T-cell (primary cell): ENCODE measurements at regions of chr10 and their contacts with region 1.

Region 1: DNA sequence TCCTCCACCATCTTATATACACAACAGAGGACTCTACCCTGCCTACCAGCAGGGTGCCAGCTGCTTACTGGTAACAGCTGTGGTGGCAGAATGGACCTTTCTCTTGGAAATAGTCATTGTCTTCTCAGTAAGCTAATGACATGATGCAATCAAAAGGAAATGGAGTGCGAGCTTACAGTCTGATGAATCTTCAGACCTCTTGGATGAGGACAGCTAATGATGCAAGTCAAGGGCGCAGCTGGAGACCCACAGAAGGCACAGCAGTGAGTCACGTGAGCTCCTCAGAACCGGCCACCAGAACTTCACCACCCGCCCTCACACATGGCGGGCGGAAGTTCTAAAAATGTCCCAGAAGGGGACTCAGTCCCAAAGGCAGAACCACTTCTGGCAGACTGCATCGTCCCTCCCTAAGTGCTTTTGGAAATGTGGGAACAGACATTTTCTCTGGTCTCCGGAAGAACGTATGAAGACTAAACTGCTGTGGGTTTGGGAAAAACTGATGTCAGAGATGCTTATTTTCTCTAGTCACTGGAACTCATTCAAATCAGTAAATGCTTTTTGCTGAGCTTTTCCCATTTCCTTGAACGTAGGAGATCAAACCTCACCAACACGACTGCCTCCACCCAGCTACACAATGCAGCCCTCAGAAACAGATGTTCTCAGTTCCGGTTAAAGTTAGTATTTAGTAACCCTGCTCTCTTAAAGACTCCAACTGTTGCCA is 96.4 kb downstream of the FAS start:
- DNase-seq: peak in 2 of 35 experiments; percentile 0 to 2
- ATAC-seq: no peak
- H3K4me3 ChIP-seq: no peak overlapping the region
- H3K4me3 Mint-ChIP-seq: peak overlapping the region in 1 of 3 donors; percentile 6
- H3K27ac ChIP-seq: no peak overlapping the region
- H3K27ac Mint-ChIP-seq: peak overlapping the region; percentile 9 to 56
- H3K4me1 ChIP-seq: peaks cover 0 to 7% of the 10 kb centered on the region in 2 experiments
- H3K4me1 Mint-ChIP-seq: peaks cover 9 to 21% (median 16%) of the 10 kb centered on the region in 3 donors
- H3K27me3 ChIP-seq: no peaks in the 10 kb centered on the region
- H3K27me3 Mint-ChIP-seq: no peaks in the 10 kb centered on the region

Region 2: DNA sequence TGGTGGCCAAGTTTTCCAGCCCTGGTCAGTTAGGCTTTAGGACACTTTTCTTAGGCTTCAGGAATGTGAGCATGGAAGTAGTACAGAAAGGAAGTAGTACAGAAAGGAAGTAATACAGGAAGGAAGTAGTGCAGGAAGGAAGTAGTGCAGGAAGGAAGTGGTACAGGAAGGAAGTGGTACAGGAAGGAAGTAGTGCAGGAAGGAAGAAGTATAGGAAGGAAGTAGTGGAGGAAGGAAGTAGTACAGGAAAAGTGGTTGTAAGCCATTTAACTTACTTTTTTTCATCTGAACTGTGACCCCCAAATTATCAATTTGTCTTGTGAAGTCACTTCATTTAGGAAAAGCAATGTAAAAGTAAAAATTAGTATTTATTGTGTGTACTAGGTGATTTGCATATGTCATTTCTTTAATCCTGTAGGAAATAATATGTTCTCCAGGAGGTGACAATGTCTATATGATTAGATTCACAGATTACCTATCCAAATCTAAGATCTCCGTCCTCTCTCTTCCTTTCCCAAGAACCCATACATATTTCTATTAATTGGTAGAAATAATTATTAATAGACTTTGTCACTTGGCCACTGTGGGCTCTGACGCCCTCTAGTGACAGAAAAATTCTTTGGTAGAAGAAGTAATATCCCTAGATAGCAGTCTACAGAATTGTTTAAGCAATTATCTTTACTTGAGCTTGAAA is 100.3 kb before region 1 on chr10:
- CTCF ChIA-PET with region 1: interaction called in 1 of 2 experiments, 3 read pairs
- POLR2A ChIA-PET with region 1: interaction called in 1 of 2 experiments, 13 read pairs
- DNase-seq: peak in 1 of 35 experiments; percentile 58
- ATAC-seq: no peak
- H3K4me3 ChIP-seq: no peak overlapping the region
- H3K4me3 Mint-ChIP-seq: peak overlapping the region in 1 of 3 donors; percentile 31
- H3K27ac ChIP-seq: peak overlapping the region; percentile 27
- H3K27ac Mint-ChIP-seq: peak overlapping the region; percentile 9 to 89
- H3K4me1 ChIP-seq: peaks cover 8 to 18% of the 10 kb centered on the region in 2 experiments
- H3K4me1 Mint-ChIP-seq: peaks cover 52 to 59% (median 55%) of the 10 kb centered on the region in 3 donors
- H3K27me3 ChIP-seq: no peaks in the 10 kb centered on the region
- H3K27me3 Mint-ChIP-seq: no peaks in the 10 kb centered on the region